ENCODE measurements at regions of chr16 and their contacts with region 1.

Region 1: DNA sequence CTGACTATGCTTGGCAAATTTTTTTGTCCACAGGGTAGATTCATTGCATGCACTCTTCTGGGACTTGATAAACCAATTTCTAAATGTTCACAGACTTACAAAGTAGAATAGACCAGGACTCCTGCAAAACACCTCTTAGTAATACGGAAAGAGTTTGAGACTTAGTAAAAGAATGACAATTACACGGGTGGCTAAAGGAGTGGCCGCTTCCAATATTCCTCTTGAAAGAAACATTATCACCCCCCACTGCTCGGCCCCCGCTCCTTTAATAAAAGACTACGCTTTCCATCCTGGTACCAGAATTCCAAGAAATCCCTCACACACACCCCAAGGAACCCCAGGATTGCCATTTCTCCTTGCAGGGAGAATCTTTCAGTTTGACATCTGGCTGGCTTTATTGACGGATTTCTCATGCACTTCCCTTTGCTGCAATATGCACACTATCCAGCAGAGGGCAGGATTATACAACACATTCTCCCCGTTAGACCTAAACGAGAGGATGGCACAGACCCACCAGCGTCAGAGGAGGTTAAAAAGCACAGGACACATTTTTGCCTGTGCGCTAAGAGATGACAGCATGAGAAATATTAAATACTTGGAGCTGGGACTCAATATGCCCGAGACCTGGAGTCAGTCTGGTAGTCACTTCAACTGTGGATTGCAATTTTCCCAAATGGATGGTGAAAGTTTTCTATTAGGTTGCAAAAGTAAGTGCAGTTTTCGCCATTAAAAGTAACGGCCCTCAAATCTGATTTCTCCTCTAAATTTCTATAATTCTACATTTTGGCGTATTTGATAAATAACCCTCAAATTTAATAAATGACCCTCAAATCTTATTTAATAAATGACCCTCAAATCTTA is 46.6 kb upstream of the NUDT7 start:
- DNase-seq: peak; percentile 89
- H3K4me3 Mint-ChIP-seq: no peak overlapping the region
- H3K27ac Mint-ChIP-seq: no peak overlapping the region
- H3K4me1 Mint-ChIP-seq: no peaks in the 10 kb centered on the region
- H3K27me3 Mint-ChIP-seq: no peaks in the 10 kb centered on the region

Region 2: GRCh38 chr16:77696149-77696548 is 20.5 kb after region 1 on chr16:
- intact Hi-C with region 1: no loop called
- DNase-seq: no peak
- H3K4me3 Mint-ChIP-seq: no peak overlapping the region
- H3K27ac Mint-ChIP-seq: no peak overlapping the region
- H3K4me1 Mint-ChIP-seq: no peaks in the 10 kb centered on the region
- H3K27me3 Mint-ChIP-seq: peaks cover 14% of the 10 kb centered on the region

Region 3: GRCh38 chr16:77788181-77789084 is 112.7 kb after region 1 on chr16 and contains the start of gene VAT1L:
- intact Hi-C with region 1: loop called (anchors 10 kb)
- DNase-seq: peak; percentile 64
- H3K4me3 Mint-ChIP-seq: peak within 1 kb of the TSS; percentile 81
- H3K27ac Mint-ChIP-seq: no peak within 1 kb of the TSS
- H3K4me1 Mint-ChIP-seq: peaks cover 5% of the 10 kb centered on the region
- H3K27me3 Mint-ChIP-seq: peaks cover 58% of the 10 kb centered on the region
- total RNA-seq, gene VAT1L: not detected in 2 replicates

Region 4: DNA sequence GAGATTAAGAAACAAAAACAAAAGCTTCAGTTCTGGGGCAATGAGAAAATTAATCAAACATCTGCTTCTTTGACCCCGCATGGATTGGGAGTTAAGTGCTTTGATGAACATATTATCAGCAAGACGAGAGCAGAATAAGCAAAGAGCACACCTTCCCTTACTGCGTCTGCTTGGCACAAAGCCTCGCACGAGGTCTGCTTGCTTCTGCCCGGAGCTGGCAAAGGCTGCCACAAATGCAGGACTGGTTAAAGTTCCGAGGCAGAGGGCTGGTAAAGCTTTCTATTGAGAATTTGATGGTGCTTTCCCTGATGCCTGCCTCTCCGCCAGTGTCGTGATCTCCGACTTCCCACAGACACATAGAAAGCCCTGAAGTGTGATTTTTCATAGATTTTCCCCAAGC is 129.7 kb after region 1 on chr16:
- intact Hi-C with region 1: no loop called
- DNase-seq: no peak
- H3K4me3 Mint-ChIP-seq: no peak overlapping the region
- H3K27ac Mint-ChIP-seq: no peak overlapping the region
- H3K4me1 Mint-ChIP-seq: no peaks in the 10 kb centered on the region
- H3K27me3 Mint-ChIP-seq: no peaks in the 10 kb centered on the region

Region 5: DNA sequence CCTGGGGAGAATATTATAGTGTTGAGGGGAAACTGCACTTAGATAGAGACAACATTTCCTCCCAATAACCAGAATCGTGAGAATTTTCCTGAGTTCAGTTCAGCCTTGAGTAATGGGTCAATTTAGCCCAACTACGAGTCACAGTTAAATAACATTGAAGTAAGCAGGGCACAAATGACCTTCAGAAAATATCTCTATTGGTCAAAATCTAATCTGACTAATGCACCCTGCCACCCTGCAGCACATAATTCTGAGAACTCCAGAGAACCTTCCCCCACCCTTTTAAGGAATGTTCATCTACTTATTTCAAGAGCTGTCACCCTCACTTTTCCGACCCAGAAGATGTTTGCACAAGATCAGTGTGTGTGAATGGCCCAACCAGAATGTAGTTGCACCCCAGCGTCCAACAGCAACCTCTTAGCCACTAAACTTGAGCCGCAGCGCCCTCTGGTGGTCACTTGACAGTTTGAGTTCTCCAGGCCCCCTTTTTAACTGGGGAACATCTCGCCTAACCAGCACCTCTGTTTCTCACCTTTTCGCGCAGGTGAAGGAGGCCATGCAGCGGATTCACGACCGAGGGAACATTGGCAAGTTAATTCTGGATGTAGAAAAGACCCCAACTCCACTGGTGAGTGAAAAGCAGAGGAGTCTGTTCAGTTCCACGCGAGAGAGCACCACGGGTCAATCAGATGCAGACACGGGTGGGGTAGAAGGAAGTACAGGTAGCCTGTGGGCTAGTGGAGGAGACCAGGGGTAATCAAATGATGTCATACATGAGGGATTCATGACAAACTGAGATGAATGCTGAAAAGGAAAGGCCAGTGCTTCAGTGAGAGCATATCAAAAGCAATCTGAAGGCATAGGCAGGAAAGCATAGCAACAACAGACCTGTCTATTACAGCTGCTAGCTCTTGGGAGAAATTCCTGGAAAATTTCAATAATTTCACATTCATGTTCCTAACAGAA is 295.9 kb after region 1 on chr16:
- intact Hi-C with region 1: loop called (anchors 1 kb)
- DNase-seq: peak; percentile 91
- H3K4me3 Mint-ChIP-seq: no peak overlapping the region
- H3K27ac Mint-ChIP-seq: no peak overlapping the region
- H3K4me1 Mint-ChIP-seq: no peaks in the 10 kb centered on the region
- H3K27me3 Mint-ChIP-seq: no peaks in the 10 kb centered on the region

Region 6: DNA sequence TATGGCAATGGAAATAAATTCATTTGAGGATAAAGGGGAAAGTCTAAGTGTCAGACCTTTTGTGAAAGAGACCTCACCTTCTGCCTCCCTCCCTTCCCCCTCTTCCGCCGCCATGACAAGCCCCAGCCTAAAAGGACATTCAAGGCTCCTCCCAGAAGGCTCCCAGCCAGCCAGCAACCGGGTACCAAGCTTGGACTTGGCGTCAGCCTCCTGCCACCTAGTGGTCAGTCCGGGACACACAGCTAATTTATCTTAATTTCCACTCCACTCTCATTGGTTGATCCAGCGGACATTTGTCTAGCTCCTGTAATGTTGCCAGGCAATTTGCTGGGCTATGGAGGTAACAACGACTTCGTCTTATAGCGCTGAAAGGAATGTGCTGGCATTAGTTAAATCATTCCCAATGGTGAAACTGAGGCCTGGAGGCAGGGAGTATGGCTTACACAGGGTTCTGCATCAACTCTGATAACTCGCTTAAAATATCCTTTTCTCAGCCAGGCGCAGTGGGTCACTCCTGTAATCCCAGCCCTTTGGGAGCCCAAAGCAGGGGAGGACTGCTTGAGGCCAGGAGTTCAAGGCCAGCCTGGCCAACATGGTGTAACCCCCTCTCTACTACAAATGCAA is 327.3 kb after region 1 on chr16:
- intact Hi-C with region 1: loop called (anchors 1 kb)
- DNase-seq: peak; percentile 92
- H3K4me3 Mint-ChIP-seq: no peak overlapping the region
- H3K27ac Mint-ChIP-seq: no peak overlapping the region
- H3K4me1 Mint-ChIP-seq: peaks cover 3% of the 10 kb centered on the region
- H3K27me3 Mint-ChIP-seq: no peaks in the 10 kb centered on the region